ENCODE measurements at regions of chr14 and their contacts with region 1.

Region 1: DNA sequence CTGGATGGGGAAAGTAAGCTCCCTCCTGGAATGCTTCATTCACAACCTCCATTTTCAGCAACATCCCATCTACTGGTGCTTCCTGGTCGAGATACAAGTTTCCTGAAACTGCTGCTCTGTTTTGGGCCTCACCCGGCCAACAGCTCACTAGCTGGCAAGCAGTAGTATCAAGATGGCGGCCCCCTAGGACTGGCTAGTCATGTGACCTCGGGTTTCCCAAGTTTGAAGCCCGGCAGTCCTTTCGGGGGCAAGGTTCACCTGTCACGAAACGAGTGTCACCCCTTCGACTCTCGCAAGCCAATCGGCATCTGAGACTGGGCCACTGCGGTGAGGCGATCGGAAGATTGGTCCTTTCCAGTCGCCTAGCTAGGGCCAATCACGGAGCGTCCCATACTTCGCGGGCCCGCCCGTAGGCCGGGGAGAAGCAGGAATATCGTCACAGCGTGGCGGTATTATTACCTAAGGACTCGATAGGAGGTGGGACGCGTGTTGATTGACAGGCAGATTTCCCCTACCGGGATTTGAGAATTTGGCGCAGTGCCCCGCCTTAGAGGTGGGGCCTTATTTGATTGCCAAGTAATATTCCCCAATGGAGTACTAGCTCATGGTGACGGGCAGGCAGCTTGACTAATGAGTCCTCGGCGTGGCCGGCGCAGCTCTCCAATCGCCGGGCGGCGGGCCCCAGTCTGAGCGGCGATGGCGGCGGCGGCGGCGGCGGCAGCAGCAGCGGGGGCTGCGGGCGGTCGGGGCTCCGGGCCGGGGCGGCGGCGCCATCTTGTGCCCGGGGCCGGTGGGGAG is at the start of gene PABPN1:
- DNase-seq: peak; percentile 98 to 100
- H3K4me3 ChIP-seq: peak within 1 kb of the TSS; percentile 98 to 99
- H3K27ac ChIP-seq: peak within 1 kb of the TSS; percentile 98 to 99
- H3K4me1 ChIP-seq: peaks cover 5 to 16% of the 10 kb centered on the region in 2 donors
- H3K27me3 ChIP-seq: no peaks in the 10 kb centered on the region
- CTCF ChIP-seq: no peak
- total RNA-seq, gene PABPN1: 90.6 TPM

Region 2: GRCh38 chr14:23306410-23307145 is 14.4 kb before region 1 on chr14 and contains the start of gene BCL2L2:
- intact Hi-C with region 1: loop called (anchors 1 kb)
- DNase-seq: peak; percentile 70 to 97
- H3K4me3 ChIP-seq: peak within 1 kb of the TSS; percentile 75 to 82
- H3K27ac ChIP-seq: peak within 1 kb of the TSS; percentile 92 to 96
- H3K4me1 ChIP-seq: peaks cover 19 to 23% of the 10 kb centered on the region in 2 donors
- H3K27me3 ChIP-seq: no peaks in the 10 kb centered on the region
- CTCF ChIP-seq: no peak
- total RNA-seq, gene BCL2L2: 49.2 TPM

Region 3: DNA sequence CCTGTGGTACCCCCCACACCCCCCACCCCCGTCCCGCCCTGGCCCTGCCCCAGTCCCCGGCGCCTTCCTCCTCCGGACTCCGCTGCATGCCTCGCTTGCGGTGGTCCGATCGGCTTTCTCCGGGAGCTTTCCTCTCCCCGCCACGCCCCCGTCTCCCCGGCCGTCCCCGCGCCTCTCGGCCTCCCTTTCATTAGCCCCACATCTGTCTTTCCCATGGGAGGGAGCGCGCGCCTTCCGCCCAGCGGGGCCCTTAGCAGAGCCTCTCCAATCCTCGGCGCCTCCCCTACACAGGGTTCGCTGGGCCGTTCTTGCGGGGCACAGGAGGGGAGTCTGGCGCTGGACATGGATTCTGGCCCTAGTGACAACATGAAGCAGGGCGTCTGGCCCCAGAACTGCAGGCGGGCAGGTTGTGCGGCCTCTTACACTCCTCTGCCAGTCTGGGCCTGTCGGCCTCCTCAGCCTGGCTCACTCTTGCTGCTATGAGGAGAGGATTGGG is 45.5 kb after region 1 on chr14:
- intact Hi-C with region 1: loop called (anchors 1 kb)
- DNase-seq: peak in 1 of 2 donors; percentile 83
- H3K4me3 ChIP-seq: peak overlapping the region; percentile 65 to 86
- H3K27ac ChIP-seq: peak overlapping the region; percentile 95 to 97
- H3K4me1 ChIP-seq: peaks cover 5 to 18% of the 10 kb centered on the region in 2 donors
- H3K27me3 ChIP-seq: no peaks in the 10 kb centered on the region
- CTCF ChIP-seq: no peak

Region 4: DNA sequence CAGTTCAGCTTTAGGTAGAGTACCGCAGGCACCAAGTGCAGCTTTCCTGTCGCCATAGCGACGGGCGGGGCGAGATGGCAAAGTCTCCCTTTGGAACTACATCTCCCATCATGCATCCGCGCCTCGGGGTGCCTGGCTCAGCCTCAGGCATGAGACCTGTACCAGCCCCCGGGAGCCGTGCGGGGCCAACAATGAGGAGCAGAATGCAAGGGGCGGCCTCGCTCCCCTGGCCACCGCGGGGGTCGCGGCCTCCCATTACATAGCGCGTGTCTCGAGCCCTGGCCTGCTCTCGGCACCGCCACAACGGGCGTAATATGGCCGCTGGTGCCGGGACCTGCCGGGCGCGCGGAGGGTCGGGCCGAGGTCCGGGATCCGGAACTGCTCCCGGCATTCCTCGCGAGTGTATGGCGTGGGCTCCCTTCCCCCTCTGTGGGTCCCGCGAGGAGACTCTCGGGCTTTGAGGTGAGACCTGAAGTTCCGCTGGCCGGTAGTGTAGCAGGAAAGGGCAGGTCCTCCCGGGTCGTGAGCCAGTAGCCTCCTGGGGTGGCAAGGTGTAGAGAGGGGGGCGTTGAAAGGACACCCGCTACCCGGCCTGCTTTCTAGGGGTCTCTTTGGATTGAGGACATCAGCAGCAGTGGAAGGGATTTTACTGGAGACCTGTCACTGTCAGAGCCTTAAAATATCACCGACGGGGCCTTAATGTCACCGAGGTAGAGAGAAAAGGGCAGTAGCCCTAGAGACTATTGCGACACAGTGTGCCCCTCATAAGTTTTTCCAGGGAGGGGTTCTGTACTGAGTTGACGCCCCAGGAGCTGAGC is 235.1 kb after region 1 on chr14 and contains the start of gene THTPA:
- intact Hi-C with region 1: loop called (anchors 5 kb)
- DNase-seq: peak; percentile 71 to 96
- H3K4me3 ChIP-seq: peak within 1 kb of the TSS; percentile 85 to 89
- H3K27ac ChIP-seq: peak within 1 kb of the TSS; percentile 92 to 97
- H3K4me1 ChIP-seq: peaks cover 5 to 25% of the 10 kb centered on the region in 2 donors
- H3K27me3 ChIP-seq: no peaks in the 10 kb centered on the region
- CTCF ChIP-seq: no peak
- total RNA-seq, gene THTPA: 115 TPM

Measured in ascending aorta (tissue), 2 donors.